Posterior cingulate gyrus (tissue), 11 donors: ENCODE measurements at regions of chr2 and their contacts with region 1.

Region 1: GRCh38 chr2:17672583-17673317 is 80.9 kb downstream of the SMC6 start:
- DNase-seq: no peak

Region 2: GRCh38 chr2:17620280-17620679 is 52.5 kb before region 1 on chr2:
- intact Hi-C with region 1: no loop called
- DNase-seq: peak in 8 of 10 donors; percentile 36 to 93 (median 60)

Region 3: GRCh38 chr2:17646081-17646554 is 26.6 kb before region 1 on chr2:
- intact Hi-C with region 1: loop called (anchors 1 kb)
- DNase-seq: peak in 2 of 10 donors; percentile 40 to 44

Region 4: GRCh38 chr2:17729880-17730279 is 57.1 kb after region 1 on chr2:
- intact Hi-C with region 1: no loop called
- DNase-seq: no peak

Region 5: GRCh38 chr2:17910980-17911379 is 238.2 kb after region 1 on chr2:
- intact Hi-C with region 1: no loop called
- DNase-seq: no peak